Sigmoid colon (tissue), 7 donors: ENCODE measurements at regions of chr12 and their contacts with region 1.

Region 1: DNA sequence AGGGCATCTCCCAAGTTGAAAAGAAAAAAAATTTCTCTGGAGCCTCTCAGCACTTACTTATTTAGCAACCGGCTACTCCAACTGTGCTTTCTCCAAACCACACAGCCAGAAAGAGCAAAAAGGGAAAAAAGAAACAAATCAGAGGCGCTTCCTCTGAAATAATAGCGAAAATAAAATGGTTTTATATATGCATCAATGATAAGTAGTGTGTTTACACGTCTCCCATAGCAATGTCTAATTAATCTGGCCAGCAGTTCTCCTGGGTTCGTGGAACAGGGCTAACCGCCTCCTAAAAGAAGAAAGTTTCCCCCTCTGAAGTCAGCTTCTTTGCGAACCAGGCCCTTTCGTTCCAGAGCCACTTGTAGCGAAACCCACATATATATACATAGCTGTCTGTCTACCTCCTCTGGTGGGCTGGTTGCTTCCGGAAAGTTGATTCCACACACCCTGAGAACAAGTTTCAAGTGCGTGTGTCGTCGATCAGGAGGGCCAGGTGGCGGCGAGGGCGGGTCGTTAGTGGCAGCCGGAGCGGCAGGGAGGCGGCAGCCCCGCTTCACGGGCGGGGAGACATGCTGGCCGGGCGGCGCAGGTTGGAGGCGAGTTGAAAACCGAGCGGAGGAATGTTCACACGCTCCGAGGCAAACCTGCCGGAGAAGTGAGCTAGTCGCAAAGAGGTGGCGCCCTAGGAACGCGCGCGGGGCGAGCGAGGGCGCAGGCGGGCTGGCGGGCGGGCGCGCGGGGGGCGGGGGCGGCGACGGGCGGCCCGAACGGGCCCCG is 2.7 kb downstream of the PTHLH start:
- DNase-seq: peak; percentile 74
- H3K4me3 ChIP-seq: peak overlapping the region; percentile 31 to 59 (median 54)
- H3K27ac ChIP-seq: peak overlapping the region; percentile 59 to 69 (median 66)
- H3K4me1 ChIP-seq: peaks cover 0 to 38% (median 34%) of the 10 kb centered on the region in 4 donors
- H3K27me3 ChIP-seq: peaks cover 0 to 86% (median 35%) of the 10 kb centered on the region in 3 donors
- CTCF ChIP-seq: no peak
- EP300 ChIP-seq: no peak
- POLR2A ChIP-seq: no peak

Region 2: DNA sequence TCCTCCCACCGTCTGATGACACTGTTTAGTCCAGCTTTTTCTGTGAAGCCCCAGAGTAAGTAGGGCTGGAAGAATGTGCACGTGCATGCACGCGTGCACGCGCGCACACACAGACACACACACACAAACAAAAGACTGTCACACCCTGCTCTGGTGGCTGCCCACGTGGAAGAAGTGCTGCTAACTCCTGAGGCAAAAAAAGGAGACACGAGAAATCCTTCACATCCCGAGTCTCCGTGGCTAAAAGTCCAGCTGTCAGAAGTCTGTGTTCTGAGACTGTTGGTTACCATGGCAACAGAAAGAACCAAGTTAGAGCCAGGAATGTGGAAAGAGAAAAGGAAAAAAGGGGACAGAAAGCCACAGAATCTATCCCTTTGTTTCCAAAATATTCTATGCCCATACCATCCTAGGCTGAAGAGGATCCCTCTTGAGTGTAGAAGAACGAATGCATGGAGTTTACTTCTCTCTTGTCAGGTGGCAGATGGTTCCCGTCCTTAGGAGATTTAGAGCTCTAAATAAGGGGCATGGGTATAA is 885.9 kb before region 1 on chr12:
- intact Hi-C with region 1: no loop called
- DNase-seq: no peak
- H3K4me3 ChIP-seq: no peak overlapping the region
- H3K27ac ChIP-seq: no peak overlapping the region
- H3K4me1 ChIP-seq: peaks cover 0 to 24% (median 10%) of the 10 kb centered on the region in 4 donors
- H3K27me3 ChIP-seq: no peaks in the 10 kb centered on the region
- CTCF ChIP-seq: no peak
- EP300 ChIP-seq: no peak
- POLR2A ChIP-seq: no peak

Region 3: GRCh38 chr12:28872654-28873268 is 902.9 kb after region 1 on chr12:
- intact Hi-C with region 1: loop called (anchors 10 kb)
- DNase-seq: no peak
- H3K4me3 ChIP-seq: no peak overlapping the region
- H3K27ac ChIP-seq: no peak overlapping the region
- H3K4me1 ChIP-seq: peaks cover 0 to 16% (median 0%) of the 10 kb centered on the region in 4 donors
- H3K27me3 ChIP-seq: no peaks in the 10 kb centered on the region
- CTCF ChIP-seq: peak in 2 of 4 experiments; percentile 28 to 46
- EP300 ChIP-seq: no peak
- POLR2A ChIP-seq: no peak